ENCODE measurements at regions of chr3 and their contacts with region 1.

Region 1: GRCh38 chr3:36763850-36764703 is at the start of gene DCLK3:
- DNase-seq: peak; percentile 84
- H3K4me3 ChIP-seq: peak within 1 kb of the TSS in 1 of 2 experiments; percentile 45; a peak in 1 of 4 replicates
- H3K27ac ChIP-seq: no peak within 1 kb of the TSS
- H3K4me1 ChIP-seq: peaks cover 0 to 3% of the 10 kb centered on the region in 2 experiments; a peak in 1 of 4 replicates
- H3K27me3 ChIP-seq: peaks cover 34% of the 10 kb centered on the region; the same call in 1 of the 2 replicates
- CTCF ChIP-seq: no peak
- EP300 ChIP-seq: no peak
- RAD21 ChIP-seq: no peak
- polyA plus RNA-seq, gene DCLK3: not detected in 2 replicates

Region 2: DNA sequence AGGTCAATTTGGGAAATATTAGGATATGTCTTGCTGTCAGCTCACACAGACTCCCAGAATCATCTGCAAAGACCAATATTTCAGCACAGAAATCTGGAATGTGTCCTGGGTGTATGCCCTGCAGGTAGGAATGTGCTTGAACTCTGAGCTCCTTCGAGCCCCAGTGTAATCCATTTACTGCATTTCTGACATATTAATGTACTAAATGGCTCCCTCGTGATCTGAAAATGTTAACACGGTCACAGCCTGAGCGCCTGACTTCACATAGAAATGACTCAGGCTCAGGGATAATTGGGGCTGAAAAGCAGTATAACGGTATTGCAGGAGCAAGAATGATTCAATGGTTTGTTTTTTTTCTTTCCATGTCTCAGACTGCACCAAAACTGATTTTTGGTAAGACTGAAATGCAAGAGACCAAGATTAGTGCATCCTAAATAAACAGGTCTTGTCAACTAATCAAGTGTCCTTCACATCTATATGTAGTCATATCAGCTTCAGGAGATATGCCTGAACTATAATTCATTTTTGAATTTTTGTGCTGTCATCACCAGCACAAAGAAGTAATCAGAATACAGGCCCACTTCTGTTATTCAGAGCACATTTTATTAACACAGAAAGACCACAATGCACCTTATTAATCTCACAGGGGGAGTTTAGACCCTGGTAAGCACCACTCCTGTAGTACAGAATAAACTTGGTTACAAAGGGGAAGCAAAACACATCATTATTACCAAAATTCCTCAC is 49.6 kb before region 1 on chr3:
- CTCF ChIA-PET with region 1: no interaction called
- POLR2A ChIA-PET with region 1: no interaction called
- DNase-seq: no peak
- H3K4me3 ChIP-seq: no peak overlapping the region
- H3K27ac ChIP-seq: no peak overlapping the region
- H3K4me1 ChIP-seq: no peaks in the 10 kb centered on the region; a peak in 1 of 4 replicates
- H3K27me3 ChIP-seq: no peaks in the 10 kb centered on the region
- CTCF ChIP-seq: peak; percentile 42; the same call in 1 of the 2 replicates
- EP300 ChIP-seq: no peak
- RAD21 ChIP-seq: no peak

Region 3: GRCh38 chr3:36741285-36741684 is 22.8 kb before region 1 on chr3:
- CTCF ChIA-PET with region 1: interaction called, 10 read pairs
- POLR2A ChIA-PET with region 1: no interaction called
- DNase-seq: no peak
- H3K4me3 ChIP-seq: no peak overlapping the region
- H3K27ac ChIP-seq: no peak overlapping the region
- H3K4me1 ChIP-seq: peaks cover 0 to 32% of the 10 kb centered on the region in 2 experiments; a peak in 2 of 4 replicates
- H3K27me3 ChIP-seq: no peaks in the 10 kb centered on the region
- CTCF ChIP-seq: peak; percentile 23; the same call in 1 of the 2 replicates
- EP300 ChIP-seq: no peak
- RAD21 ChIP-seq: peak; percentile 46

Region 4: DNA sequence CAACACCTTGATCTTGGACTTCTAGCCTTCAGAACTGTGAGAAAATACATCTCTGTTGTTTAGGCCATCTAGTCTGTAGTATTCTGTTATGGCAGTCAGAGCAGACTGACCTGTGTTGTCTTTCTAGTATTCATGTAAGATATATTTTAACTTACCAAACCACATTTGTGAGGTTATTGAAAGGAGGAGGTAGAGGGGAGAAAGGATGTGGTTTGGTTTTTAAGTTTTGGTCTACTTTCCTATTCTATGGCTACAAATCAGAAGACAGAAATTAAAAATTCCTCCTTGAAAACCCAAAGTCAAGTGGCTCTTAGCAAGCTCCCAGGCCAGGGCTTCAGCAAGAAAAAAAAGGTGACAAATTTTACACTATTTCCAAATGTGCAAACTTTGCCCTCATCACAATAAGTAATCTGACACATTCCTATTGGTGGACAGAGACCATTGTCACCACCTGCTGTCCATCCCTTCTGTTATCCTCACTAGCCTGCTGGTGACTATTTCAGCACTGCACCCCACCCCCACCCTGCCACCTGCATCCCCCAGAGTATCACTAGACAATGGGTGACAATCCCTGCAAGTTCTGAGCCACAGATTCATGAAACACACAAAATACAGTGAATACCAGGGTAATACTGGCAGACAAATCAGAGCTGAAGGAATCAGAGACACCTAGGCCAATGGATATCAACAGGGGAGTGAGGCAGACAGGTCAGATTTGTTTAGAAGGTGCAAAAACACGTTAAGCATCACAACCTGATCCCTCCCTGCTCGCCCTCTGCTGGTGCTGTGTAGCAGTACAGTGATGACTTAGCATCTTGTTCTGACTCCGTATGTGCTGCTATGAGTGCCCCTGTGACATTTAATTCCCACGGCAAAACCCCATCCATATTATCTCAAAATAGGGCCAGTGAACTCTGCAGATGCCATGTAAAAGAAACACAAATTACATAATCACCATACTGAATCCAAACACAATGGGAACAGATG is 79.3 kb after region 1 on chr3:
- CTCF ChIA-PET with region 1: no interaction called
- POLR2A ChIA-PET with region 1: no interaction called
- DNase-seq: peak; percentile 43
- H3K4me3 ChIP-seq: no peak overlapping the region; a peak in 1 of 4 replicates
- H3K27ac ChIP-seq: no peak overlapping the region
- H3K4me1 ChIP-seq: peaks cover 0 to 2% of the 10 kb centered on the region in 2 experiments; a peak in 1 of 4 replicates
- H3K27me3 ChIP-seq: no peaks in the 10 kb centered on the region
- CTCF ChIP-seq: peak; percentile 55
- EP300 ChIP-seq: no peak
- RAD21 ChIP-seq: peak; percentile 35

Region 5: GRCh38 chr3:37347941-37348340 is 583.9 kb after region 1 on chr3:
- CTCF ChIA-PET with region 1: no interaction called
- POLR2A ChIA-PET with region 1: no interaction called
- DNase-seq: no peak
- H3K4me3 ChIP-seq: no peak overlapping the region
- H3K27ac ChIP-seq: no peak overlapping the region
- H3K4me1 ChIP-seq: peaks cover 0 to 4% of the 10 kb centered on the region in 2 experiments; a peak in 1 of 4 replicates
- H3K27me3 ChIP-seq: no peaks in the 10 kb centered on the region
- CTCF ChIP-seq: no peak
- EP300 ChIP-seq: no peak
- RAD21 ChIP-seq: no peak

Measured in SK-N-SH (cell line).